ENCODE measurements at regions of chr13 and their contacts with region 1.

Region 1: DNA sequence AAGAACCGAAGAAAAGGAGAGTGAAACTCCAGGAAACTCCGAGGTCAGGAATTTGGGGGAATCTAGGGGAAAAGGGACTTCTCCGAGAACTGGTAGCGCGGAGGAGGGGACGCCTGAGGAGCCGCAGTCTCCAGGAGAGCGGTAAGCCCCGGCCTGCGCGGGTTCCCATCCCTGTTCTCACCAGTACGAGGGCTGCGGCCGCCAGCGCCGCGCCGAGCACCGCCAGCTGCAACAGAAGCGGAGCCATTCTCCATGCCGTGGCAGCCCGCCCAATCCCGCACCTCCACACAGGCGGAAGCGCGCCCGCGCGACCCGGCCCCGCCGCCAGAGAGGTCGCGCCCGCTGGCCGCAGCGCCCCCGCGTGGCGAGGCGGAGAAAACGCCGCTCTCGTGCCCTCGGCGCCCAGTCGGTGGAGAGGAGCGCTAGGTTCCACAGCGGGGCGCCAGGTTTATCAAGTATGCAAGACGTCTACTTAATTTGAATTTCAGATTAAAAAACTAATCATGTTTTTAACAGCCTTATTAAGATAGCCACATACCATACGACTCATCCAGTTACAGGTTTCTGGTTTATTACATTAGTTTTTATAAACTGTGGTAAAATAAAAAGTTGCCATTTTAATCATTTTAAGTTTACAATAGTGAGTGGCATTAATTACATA is at the start of gene ALG5:
- DNase-seq: peak; percentile 86 to 96 (median 93)
- ATAC-seq: peak; percentile 62
- H3K4me3 ChIP-seq: peak within 1 kb of the TSS; percentile 88 to 94
- H3K4me3 Mint-ChIP-seq: peak within 1 kb of the TSS; percentile 98
- H3K27ac ChIP-seq: peak within 1 kb of the TSS; percentile 93 to 99
- H3K27ac Mint-ChIP-seq: peak within 1 kb of the TSS; percentile 100
- H3K4me1 ChIP-seq: peaks cover 21% of the 10 kb centered on the region
- H3K4me1 Mint-ChIP-seq: peaks cover 41% of the 10 kb centered on the region
- H3K27me3 ChIP-seq: no peaks in the 10 kb centered on the region
- H3K27me3 Mint-ChIP-seq: no peaks in the 10 kb centered on the region
- CTCF ChIP-seq: peak; percentile 95
- total RNA-seq, gene ALG5: 17.8 to 20.7 TPM

Region 2: DNA sequence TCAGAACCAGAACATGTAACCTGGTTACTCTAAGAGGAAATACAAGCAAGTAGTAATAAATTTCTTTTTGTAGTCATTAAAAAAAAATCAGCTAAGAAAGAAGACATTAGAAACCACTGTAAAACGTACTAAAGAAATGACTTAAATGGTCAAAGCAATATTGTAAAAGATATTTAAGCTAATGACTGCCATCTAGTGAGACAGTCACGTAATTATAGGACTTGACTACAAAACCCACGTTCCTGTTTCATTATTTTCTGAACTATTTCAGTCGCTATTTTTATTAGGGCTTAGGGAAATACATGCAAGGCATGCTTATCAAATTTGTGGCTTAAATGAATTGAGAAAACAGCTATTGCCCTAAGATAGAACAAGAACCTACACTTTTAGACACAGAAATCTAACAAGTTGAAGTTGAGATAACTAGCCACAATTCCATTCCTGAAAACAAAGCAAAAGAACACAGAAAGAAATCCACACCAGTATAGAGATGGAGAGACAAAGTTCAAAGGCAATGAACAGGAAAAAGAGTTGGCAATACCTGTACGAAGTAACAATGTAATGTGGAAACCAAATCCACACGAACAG is 17.9 kb before region 1 on chr13:
- CTCF ChIA-PET with region 1: interaction called, 3 read pairs
- POLR2A ChIA-PET with region 1: interaction called, 13 read pairs
- intact Hi-C with region 1: no loop called
- DNase-seq: peak in 1 of 9 experiments; percentile 28
- ATAC-seq: no peak
- H3K4me3 ChIP-seq: no peak overlapping the region
- H3K4me3 Mint-ChIP-seq: no peak overlapping the region
- H3K27ac ChIP-seq: no peak overlapping the region
- H3K27ac Mint-ChIP-seq: no peak overlapping the region
- H3K4me1 ChIP-seq: no peaks in the 10 kb centered on the region
- H3K4me1 Mint-ChIP-seq: peaks cover 2% of the 10 kb centered on the region
- H3K27me3 ChIP-seq: no peaks in the 10 kb centered on the region
- H3K27me3 Mint-ChIP-seq: no peaks in the 10 kb centered on the region
- CTCF ChIP-seq: peak; percentile 37

Region 3: GRCh38 chr13:37011002-37011401 is 11.8 kb after region 1 on chr13:
- CTCF ChIA-PET with region 1: interaction called, 3 read pairs
- POLR2A ChIA-PET with region 1: interaction called, 17 read pairs
- intact Hi-C with region 1: no loop called
- DNase-seq: no peak
- ATAC-seq: no peak
- H3K4me3 ChIP-seq: no peak overlapping the region
- H3K4me3 Mint-ChIP-seq: no peak overlapping the region
- H3K27ac ChIP-seq: no peak overlapping the region
- H3K27ac Mint-ChIP-seq: no peak overlapping the region
- H3K4me1 ChIP-seq: no peaks in the 10 kb centered on the region
- H3K4me1 Mint-ChIP-seq: peaks cover 6% of the 10 kb centered on the region
- H3K27me3 ChIP-seq: no peaks in the 10 kb centered on the region
- H3K27me3 Mint-ChIP-seq: no peaks in the 10 kb centered on the region
- CTCF ChIP-seq: no peak

Region 4: DNA sequence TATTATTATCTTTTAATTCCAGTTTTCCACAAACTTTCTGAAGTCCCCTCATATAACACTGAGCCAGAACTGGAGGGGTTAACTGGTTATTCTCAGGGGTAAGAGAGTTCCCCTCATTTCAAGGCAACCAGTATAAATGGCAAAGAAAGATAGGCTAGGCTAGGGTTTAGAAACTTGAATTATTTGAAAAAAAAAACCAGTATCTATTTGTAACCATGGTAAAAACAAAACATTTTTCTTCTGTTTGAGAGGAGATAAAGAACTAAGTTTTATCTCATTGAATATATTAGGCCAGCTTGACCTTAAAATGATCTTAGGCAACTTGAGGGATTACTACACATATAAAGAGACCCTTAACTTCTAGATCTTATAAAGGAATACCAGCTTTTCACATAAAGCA is 40.7 kb after region 1 on chr13:
- CTCF ChIA-PET with region 1: no interaction called
- POLR2A ChIA-PET with region 1: interaction called, 6 read pairs
- intact Hi-C with region 1: loop called in 1 of 2 experiments (anchors 5 kb)
- DNase-seq: no peak
- ATAC-seq: no peak
- H3K4me3 ChIP-seq: no peak overlapping the region
- H3K4me3 Mint-ChIP-seq: no peak overlapping the region
- H3K27ac ChIP-seq: no peak overlapping the region
- H3K27ac Mint-ChIP-seq: no peak overlapping the region
- H3K4me1 ChIP-seq: no peaks in the 10 kb centered on the region
- H3K4me1 Mint-ChIP-seq: peaks cover 6% of the 10 kb centered on the region
- H3K27me3 ChIP-seq: no peaks in the 10 kb centered on the region
- H3K27me3 Mint-ChIP-seq: no peaks in the 10 kb centered on the region
- CTCF ChIP-seq: no peak

Region 5: DNA sequence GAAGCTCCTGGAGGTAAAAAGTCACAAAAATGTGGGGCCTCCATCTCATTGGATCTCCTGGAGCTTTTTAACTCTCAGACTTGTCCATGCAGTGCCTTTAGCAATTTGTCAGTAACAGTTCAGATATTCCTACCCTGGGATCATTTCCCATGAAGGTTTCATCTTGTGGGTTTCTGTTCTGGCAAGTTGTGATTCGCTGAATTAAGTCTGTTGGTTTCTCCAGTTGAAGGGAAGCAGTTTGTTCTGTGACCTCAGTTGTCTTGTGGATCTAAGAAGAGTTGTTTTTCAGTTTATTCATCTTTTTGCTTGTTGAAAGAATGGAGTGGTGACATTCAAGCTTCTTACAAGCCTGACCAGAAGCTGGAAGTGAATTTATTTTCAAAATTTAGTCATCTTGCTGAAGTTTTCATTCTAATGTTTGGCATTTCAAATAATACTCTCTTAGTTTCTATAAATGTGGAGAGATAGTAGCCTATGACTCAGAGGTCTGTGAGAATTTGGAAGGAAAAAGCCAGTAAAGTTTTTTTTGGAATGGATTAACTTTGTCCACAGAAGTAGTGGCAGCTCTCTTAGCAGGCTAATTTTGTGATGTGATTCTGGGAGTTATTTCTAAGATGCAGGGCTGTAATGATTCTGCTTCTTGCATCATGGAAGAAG is 226.4 kb after region 1 on chr13:
- CTCF ChIA-PET with region 1: no interaction called
- POLR2A ChIA-PET with region 1: no interaction called
- intact Hi-C with region 1: no loop called
- DNase-seq: no peak
- ATAC-seq: no peak
- H3K4me3 ChIP-seq: no peak overlapping the region
- H3K4me3 Mint-ChIP-seq: no peak overlapping the region
- H3K27ac ChIP-seq: no peak overlapping the region
- H3K27ac Mint-ChIP-seq: no peak overlapping the region
- H3K4me1 ChIP-seq: no peaks in the 10 kb centered on the region
- H3K4me1 Mint-ChIP-seq: no peaks in the 10 kb centered on the region
- H3K27me3 ChIP-seq: no peaks in the 10 kb centered on the region
- H3K27me3 Mint-ChIP-seq: no peaks in the 10 kb centered on the region
- CTCF ChIP-seq: no peak

Region 6: GRCh38 chr13:37429976-37430375 is 430.8 kb after region 1 on chr13:
- CTCF ChIA-PET with region 1: no interaction called
- POLR2A ChIA-PET with region 1: no interaction called
- intact Hi-C with region 1: no loop called
- DNase-seq: no peak
- ATAC-seq: no peak
- H3K4me3 ChIP-seq: no peak overlapping the region
- H3K4me3 Mint-ChIP-seq: no peak overlapping the region
- H3K27ac ChIP-seq: no peak overlapping the region
- H3K27ac Mint-ChIP-seq: no peak overlapping the region
- H3K4me1 ChIP-seq: no peaks in the 10 kb centered on the region
- H3K4me1 Mint-ChIP-seq: no peaks in the 10 kb centered on the region
- H3K27me3 ChIP-seq: no peaks in the 10 kb centered on the region
- H3K27me3 Mint-ChIP-seq: no peaks in the 10 kb centered on the region
- CTCF ChIP-seq: no peak

Region 7: GRCh38 chr13:38349390-38350113 is 1350.4 kb after region 1 on chr13 and contains the start of gene UFM1:
- CTCF ChIA-PET with region 1: no interaction called
- POLR2A ChIA-PET with region 1: interaction called, 9 read pairs
- intact Hi-C with region 1: loop called (anchors 1 to 5 kb)
- DNase-seq: peak; percentile 68 to 95 (median 86)
- ATAC-seq: peak; percentile 94
- H3K4me3 ChIP-seq: peak within 1 kb of the TSS; percentile 82 to 92
- H3K4me3 Mint-ChIP-seq: peak within 1 kb of the TSS; percentile 99
- H3K27ac ChIP-seq: peak within 1 kb of the TSS; percentile 85 to 93
- H3K27ac Mint-ChIP-seq: peak within 1 kb of the TSS; percentile 99
- H3K4me1 ChIP-seq: peaks cover 21% of the 10 kb centered on the region
- H3K4me1 Mint-ChIP-seq: peaks cover 42% of the 10 kb centered on the region
- H3K27me3 ChIP-seq: no peaks in the 10 kb centered on the region
- H3K27me3 Mint-ChIP-seq: no peaks in the 10 kb centered on the region
- CTCF ChIP-seq: no peak
- total RNA-seq, gene UFM1: 94.0 to 97.0 TPM